Calu3 (cell line): ENCODE measurements at regions of chr3 and their contacts with region 1.

Region 1: GRCh38 chr3:126752303-126752842 is 48.3 kb downstream of the CHCHD6 start:
- DNase-seq: peak; percentile 94
- H3K4me3 Mint-ChIP-seq: no peak overlapping the region
- H3K27ac Mint-ChIP-seq: no peak overlapping the region
- H3K4me1 Mint-ChIP-seq: peaks cover 55% of the 10 kb centered on the region
- H3K27me3 Mint-ChIP-seq: no peaks in the 10 kb centered on the region
- CTCF ChIP-seq: peak; percentile 97

Region 2: DNA sequence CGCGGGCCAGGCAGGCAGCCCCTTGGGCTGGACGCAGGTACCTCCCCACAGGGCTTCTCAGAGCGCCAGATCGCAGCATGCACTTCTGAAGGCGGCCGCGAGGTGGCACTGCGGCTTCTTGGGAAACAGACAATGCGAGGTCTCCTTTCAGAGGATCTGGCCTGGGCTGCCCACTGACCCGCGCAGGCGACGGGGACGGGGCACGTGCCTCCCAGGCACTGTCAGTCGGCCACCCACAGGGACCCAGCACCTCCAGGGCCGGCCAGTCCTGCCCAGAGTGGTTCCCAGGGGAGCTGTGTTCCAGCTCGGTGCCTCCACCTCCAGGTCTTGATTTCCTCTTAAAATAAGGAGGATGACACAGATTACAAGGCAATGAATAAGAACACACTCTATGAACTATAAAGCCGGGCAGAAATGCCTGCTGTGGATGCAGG is 73.0 kb before region 1 on chr3:
- CTCF ChIA-PET with region 1: no interaction called
- intact Hi-C with region 1: no loop called
- DNase-seq: peak; percentile 95
- H3K4me3 Mint-ChIP-seq: peak overlapping the region; percentile 25
- H3K27ac Mint-ChIP-seq: no peak overlapping the region
- H3K4me1 Mint-ChIP-seq: peaks cover 10% of the 10 kb centered on the region
- H3K27me3 Mint-ChIP-seq: peaks cover 75% of the 10 kb centered on the region
- CTCF ChIP-seq: peak; percentile 100

Region 3: DNA sequence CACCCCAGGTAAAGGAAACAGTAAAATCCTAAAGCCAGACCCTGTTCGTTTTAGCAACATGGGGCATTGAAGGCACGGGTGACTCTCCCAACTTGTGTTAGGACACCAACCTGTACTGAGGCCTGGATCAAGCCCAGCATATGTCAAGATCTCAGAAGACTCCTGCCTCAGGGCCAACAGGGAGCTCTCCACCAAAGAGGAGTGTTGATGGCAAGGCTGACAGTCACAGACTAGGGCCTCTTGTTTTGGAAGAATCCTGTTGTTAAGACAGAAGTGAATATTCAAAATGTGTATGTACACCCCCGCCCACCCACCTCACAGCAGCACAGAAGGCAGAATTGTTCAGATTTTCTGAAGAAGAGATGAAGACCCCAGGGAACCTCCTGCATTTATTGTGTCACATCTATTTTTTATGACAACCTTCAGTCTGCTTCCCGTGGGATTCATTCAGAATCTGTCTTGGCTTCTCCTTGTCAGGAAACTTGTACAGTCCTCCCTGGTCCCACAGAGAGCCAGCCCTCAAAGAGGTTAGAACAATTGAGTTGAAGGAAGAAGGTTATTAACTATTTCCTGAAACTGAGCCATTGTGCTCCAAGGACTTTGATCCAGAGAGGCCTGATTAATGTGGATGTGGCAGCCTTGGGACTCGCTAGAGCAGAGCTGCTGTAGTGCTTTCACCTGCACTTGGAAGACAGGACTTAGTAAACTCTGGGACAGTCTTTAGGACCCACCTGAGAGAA is 168.9 kb after region 1 on chr3:
- CTCF ChIA-PET with region 1: interaction called, 6 read pairs
- intact Hi-C with region 1: loop called (anchors 5 kb)
- DNase-seq: peak; percentile 39
- H3K4me3 Mint-ChIP-seq: no peak overlapping the region
- H3K27ac Mint-ChIP-seq: no peak overlapping the region
- H3K4me1 Mint-ChIP-seq: peaks cover 51% of the 10 kb centered on the region
- H3K27me3 Mint-ChIP-seq: no peaks in the 10 kb centered on the region
- CTCF ChIP-seq: no peak

Region 4: GRCh38 chr3:126982471-126983175 is 230.2 kb after region 1 on chr3 and contains the start of gene PLXNA1:
- CTCF ChIA-PET with region 1: interaction called, 5 read pairs
- intact Hi-C with region 1: loop called (anchors 1 kb)
- DNase-seq: peak; percentile 91
- H3K4me3 Mint-ChIP-seq: peak within 1 kb of the TSS; percentile 75
- H3K27ac Mint-ChIP-seq: no peak within 1 kb of the TSS
- H3K4me1 Mint-ChIP-seq: peaks cover 25% of the 10 kb centered on the region
- H3K27me3 Mint-ChIP-seq: peaks cover 32% of the 10 kb centered on the region
- CTCF ChIP-seq: peak; percentile 99
- total RNA-seq, gene PLXNA1: 81.1 and 84.3 TPM in 2 replicates

Region 5: DNA sequence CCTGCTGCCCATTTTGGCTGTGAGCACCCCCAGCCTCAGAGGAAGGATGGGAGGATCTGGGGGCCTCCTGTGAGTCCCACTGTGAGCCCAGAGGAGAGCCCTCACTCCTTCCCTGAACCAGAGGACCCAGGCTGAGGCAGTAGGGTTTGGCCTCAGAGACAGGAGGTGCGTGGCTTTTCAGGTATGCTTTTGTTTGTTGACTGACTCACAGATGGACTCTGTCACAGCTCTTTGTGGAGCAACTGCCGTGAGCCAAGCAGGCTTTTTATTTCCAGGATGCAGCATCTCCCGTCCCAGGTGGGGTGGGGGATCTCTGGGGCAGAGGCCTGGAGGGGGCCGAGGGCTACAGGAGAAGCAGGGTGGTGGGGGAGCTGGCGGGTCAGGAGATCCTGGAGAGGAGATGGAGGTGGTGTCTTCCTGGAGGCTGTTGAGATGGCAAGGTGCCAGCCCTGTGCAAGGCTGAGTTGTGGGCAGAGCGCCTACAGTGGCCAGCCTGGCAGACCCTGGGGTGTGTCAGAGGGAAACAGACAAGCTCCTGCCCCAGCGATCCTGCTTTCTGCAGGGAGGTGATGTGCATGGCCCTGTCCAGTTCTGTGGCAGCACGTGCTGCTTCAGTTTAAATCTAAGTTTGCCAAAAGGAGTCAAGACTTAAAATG is 254.5 kb after region 1 on chr3:
- CTCF ChIA-PET with region 1: interaction called, 4 read pairs
- intact Hi-C with region 1: loop called (anchors 1 kb)
- DNase-seq: peak; percentile 56
- H3K4me3 Mint-ChIP-seq: peak overlapping the region; percentile 3
- H3K27ac Mint-ChIP-seq: no peak overlapping the region
- H3K4me1 Mint-ChIP-seq: peaks cover 8% of the 10 kb centered on the region
- H3K27me3 Mint-ChIP-seq: no peaks in the 10 kb centered on the region
- CTCF ChIP-seq: no peak

Region 6: GRCh38 chr3:127172781-127173515 is 420.6 kb after region 1 on chr3:
- CTCF ChIA-PET with region 1: no interaction called
- intact Hi-C with region 1: loop called (anchors 10 kb)
- DNase-seq: peak; percentile 65
- H3K4me3 Mint-ChIP-seq: no peak overlapping the region
- H3K27ac Mint-ChIP-seq: no peak overlapping the region
- H3K4me1 Mint-ChIP-seq: no peaks in the 10 kb centered on the region
- H3K27me3 Mint-ChIP-seq: peaks cover 84% of the 10 kb centered on the region
- CTCF ChIP-seq: no peak

Region 7: DNA sequence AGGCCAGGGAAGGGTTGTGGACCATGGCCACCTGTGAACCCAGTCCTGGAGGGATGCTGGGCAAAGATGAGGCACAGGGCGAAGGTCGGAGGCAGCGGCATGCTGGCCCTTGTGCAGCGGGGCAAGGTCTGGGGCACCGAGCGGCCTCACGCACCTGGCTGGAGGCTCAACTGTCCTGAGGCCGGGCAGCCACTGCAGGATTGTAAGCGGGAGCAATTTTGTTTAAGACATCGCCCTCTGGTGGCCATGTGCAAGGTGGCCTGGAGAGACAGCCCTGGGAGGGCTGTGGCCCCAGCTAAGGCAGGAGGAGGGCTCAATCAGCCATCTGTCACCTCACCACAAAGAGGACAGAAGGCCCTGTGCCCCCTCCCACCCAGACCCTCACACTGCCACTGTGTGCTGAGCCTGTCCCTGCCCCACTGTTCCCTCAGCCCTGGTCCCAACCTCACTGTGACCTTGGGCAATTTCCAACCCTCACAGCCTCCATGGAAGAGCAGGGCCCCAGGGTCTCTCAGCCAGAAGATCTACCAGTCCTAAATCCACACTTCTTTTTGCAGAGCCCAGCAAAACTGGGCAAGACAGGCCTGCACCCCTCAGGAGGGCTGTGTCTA is 791.9 kb after region 1 on chr3:
- CTCF ChIA-PET with region 1: interaction called, 3 read pairs
- intact Hi-C with region 1: loop called (anchors 1 kb)
- DNase-seq: peak; percentile 92
- H3K4me3 Mint-ChIP-seq: no peak overlapping the region
- H3K27ac Mint-ChIP-seq: no peak overlapping the region
- H3K4me1 Mint-ChIP-seq: peaks cover 7% of the 10 kb centered on the region
- H3K27me3 Mint-ChIP-seq: peaks cover 59% of the 10 kb centered on the region
- CTCF ChIP-seq: peak; percentile 96

Region 8: GRCh38 chr3:127820221-127820825 is 1068.0 kb after region 1 on chr3:
- CTCF ChIA-PET with region 1: no interaction called
- intact Hi-C with region 1: no loop called
- DNase-seq: peak; percentile 90
- H3K4me3 Mint-ChIP-seq: peak overlapping the region; percentile 85
- H3K27ac Mint-ChIP-seq: peak overlapping the region; percentile 94
- H3K4me1 Mint-ChIP-seq: peaks cover 87% of the 10 kb centered on the region
- H3K27me3 Mint-ChIP-seq: peaks cover 13% of the 10 kb centered on the region
- CTCF ChIP-seq: peak; percentile 47